Natural killer cell (primary cell): ENCODE measurements at regions of chr18 and their contacts with region 1.

Region 1: GRCh38 chr18:26804519-26804918 is 61.0 kb downstream of the AQP4 start:
- DNase-seq: no peak
- ATAC-seq: no peak
- H3K4me3 ChIP-seq: no peak overlapping the region
- H3K4me3 Mint-ChIP-seq: no peak overlapping the region
- H3K27ac ChIP-seq: no peak overlapping the region
- H3K27ac Mint-ChIP-seq: no peak overlapping the region
- H3K4me1 ChIP-seq: no peaks in the 10 kb centered on the region
- H3K4me1 Mint-ChIP-seq: no peaks in the 10 kb centered on the region
- H3K27me3 ChIP-seq: no peaks in the 10 kb centered on the region
- H3K27me3 Mint-ChIP-seq: no peaks in the 10 kb centered on the region
- CTCF ChIP-seq: no peak

Region 2: DNA sequence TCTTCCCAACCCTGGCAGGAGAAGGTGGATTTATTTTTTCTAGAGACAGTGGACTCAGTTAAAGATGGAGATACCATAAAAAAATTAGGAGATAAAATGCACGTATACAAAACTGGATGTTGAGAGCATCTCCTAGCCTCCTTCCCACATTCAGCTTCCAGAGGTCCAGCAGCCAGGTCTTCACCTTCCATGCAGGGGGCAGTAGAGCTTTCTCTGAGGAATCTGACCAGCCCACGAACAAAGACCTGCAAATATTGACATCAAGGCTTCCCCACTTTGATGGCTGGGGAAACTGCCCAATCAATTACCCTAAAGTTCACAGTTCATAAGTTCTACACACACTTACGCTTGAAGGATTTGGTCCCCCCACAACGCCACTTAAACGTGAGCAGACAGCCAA is 36.4 kb after region 1 on chr18:
- intact Hi-C with region 1: no loop called
- DNase-seq: no peak
- ATAC-seq: no peak
- H3K4me3 ChIP-seq: no peak overlapping the region
- H3K4me3 Mint-ChIP-seq: no peak overlapping the region
- H3K27ac ChIP-seq: no peak overlapping the region
- H3K27ac Mint-ChIP-seq: no peak overlapping the region
- H3K4me1 ChIP-seq: no peaks in the 10 kb centered on the region
- H3K4me1 Mint-ChIP-seq: no peaks in the 10 kb centered on the region
- H3K27me3 ChIP-seq: no peaks in the 10 kb centered on the region
- H3K27me3 Mint-ChIP-seq: no peaks in the 10 kb centered on the region
- CTCF ChIP-seq: no peak

Region 3: DNA sequence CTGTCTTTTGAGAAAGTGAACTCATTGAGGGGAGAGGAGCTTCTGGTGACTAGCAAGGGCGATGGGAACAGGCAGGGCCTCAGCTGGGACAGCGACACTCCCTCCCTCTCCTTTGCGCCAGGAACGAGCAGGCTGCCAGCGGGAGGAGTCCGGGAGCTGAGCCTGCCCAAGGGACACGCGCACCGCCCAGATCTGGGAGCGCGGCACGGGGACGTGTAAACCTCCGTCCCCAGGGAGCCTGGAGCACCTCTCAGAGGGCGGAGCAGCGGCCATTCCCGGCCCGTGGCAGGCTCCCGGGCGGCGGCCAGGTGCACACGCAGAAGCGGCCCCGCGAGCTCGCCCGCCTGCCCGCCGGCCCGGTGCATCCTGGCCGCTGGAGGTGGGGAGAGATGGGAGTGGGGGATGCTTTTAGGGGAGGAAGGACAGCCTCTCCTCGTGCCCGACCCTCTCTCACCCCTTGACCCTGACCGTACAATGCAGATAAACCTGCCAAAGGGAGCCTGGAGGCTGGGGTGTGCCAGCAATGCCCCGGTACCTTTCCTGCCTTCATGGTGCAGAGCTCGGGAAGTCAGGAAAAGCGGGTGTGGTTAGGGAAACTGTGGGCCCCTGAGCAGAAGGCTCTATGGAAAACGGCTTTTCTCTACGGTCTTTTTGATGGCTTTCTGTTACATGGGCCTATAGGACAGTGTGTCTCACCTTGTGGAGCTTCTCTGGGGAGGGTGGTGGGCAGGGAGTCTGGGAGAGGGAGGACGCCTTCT is 58.8 kb after region 1 on chr18:
- intact Hi-C with region 1: loop called (anchors 10 kb)
- DNase-seq: no peak
- ATAC-seq: no peak
- H3K4me3 ChIP-seq: no peak overlapping the region
- H3K4me3 Mint-ChIP-seq: no peak overlapping the region
- H3K27ac ChIP-seq: no peak overlapping the region
- H3K27ac Mint-ChIP-seq: no peak overlapping the region
- H3K4me1 ChIP-seq: no peaks in the 10 kb centered on the region
- H3K4me1 Mint-ChIP-seq: no peaks in the 10 kb centered on the region
- H3K27me3 ChIP-seq: no peaks in the 10 kb centered on the region
- H3K27me3 Mint-ChIP-seq: peaks cover 9 to 13% of the 10 kb centered on the region in 2 donors
- CTCF ChIP-seq: no peak

Region 4: DNA sequence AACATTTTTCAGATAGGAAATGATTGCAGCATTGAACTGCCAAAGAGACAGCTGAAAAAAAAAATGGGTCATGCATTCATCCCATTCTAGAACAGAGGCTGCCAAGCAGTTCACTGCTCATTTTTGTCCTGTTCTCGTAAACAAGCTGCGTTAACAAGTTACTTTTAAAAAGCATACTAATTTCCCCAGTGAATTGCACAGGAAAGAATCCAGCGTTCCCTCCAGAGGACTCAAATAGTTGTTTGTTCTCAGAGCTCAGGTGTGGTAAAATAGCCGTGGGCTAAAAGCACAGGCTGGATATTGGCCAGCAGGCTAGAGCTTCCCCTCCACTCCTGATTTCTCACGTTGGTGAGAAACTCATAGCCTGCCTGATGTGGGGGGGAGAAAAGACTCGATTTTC is 137.1 kb after region 1 on chr18:
- intact Hi-C with region 1: no loop called
- DNase-seq: no peak
- ATAC-seq: no peak
- H3K4me3 ChIP-seq: no peak overlapping the region
- H3K4me3 Mint-ChIP-seq: no peak overlapping the region
- H3K27ac ChIP-seq: no peak overlapping the region
- H3K27ac Mint-ChIP-seq: no peak overlapping the region
- H3K4me1 ChIP-seq: no peaks in the 10 kb centered on the region
- H3K4me1 Mint-ChIP-seq: no peaks in the 10 kb centered on the region
- H3K27me3 ChIP-seq: no peaks in the 10 kb centered on the region
- H3K27me3 Mint-ChIP-seq: no peaks in the 10 kb centered on the region
- CTCF ChIP-seq: no peak